A549 (cell line): ENCODE measurements at regions of chr11 and their contacts with region 1.

Region 1: DNA sequence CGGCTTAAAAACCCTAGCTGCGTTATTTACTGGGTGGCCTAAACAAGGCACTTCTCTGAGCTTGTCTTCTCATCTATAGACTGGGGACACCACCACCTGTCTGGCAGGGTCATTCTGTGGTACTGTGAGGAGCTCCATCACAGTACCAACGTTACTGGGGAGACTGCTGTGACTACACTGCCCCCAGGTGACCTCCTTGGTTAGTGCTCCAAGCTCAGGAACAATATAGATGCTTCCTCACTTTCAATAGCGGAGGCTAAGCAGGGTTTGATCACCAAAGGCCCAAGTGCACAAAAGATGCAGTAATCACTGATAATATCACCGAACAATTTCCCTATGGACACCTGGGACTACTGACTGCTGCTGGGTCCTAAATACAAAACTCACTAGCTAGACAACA is 18.8 kb downstream of the PRPF19 start:
- DNase-seq: peak; percentile 41 to 53
- ATAC-seq: peak; percentile 94 to 96
- H3K4me3 ChIP-seq: no peak overlapping the region
- H3K27ac ChIP-seq: no peak overlapping the region
- H3K4me1 ChIP-seq: no peaks in the 10 kb centered on the region
- CTCF ChIP-seq: peak; percentile 49
- EP300 ChIP-seq: no peak
- POLR2A ChIP-seq: no peak
- RAD21 ChIP-seq: peak; percentile 62 to 73

Region 2: GRCh38 chr11:60821827-60822599 is 65.5 kb before region 1 on chr11:
- CTCF ChIA-PET with region 1: interaction called, 18 read pairs
- POLR2A ChIA-PET with region 1: no interaction called
- DNase-seq: no peak
- ATAC-seq: no peak
- H3K4me3 ChIP-seq: no peak overlapping the region
- H3K27ac ChIP-seq: no peak overlapping the region
- H3K4me1 ChIP-seq: no peaks in the 10 kb centered on the region
- CTCF ChIP-seq: no peak
- EP300 ChIP-seq: no peak
- POLR2A ChIP-seq: no peak
- RAD21 ChIP-seq: no peak

Region 3: GRCh38 chr11:60841797-60842667 is 45.5 kb before region 1 on chr11 and contains the start of gene CCDC86:
- CTCF ChIA-PET with region 1: interaction called, 18 read pairs
- POLR2A ChIA-PET with region 1: no interaction called
- DNase-seq: peak; percentile 96 to 99
- ATAC-seq: peak; percentile 68 to 92
- H3K4me3 ChIP-seq: peak within 1 kb of the TSS; percentile 97
- H3K27ac ChIP-seq: peak within 1 kb of the TSS; percentile 87 to 94
- H3K4me1 ChIP-seq: peaks cover 18% of the 10 kb centered on the region; the same call in 1 of the 3 replicates
- CTCF ChIP-seq: no peak
- EP300 ChIP-seq: no peak
- POLR2A ChIP-seq: peak; percentile 62
- RAD21 ChIP-seq: no peak
- polyA plus RNA-seq, gene CCDC86: 39.8 and 42.8 TPM in 2 replicates

Region 4: GRCh38 chr11:60872961-60873524 is 14.5 kb before region 1 on chr11:
- CTCF ChIA-PET with region 1: interaction called, 24 read pairs
- POLR2A ChIA-PET with region 1: no interaction called
- DNase-seq: no peak
- ATAC-seq: peak; percentile 16 to 37; a peak in 2 of 6 replicates
- H3K4me3 ChIP-seq: no peak overlapping the region
- H3K27ac ChIP-seq: peak overlapping the region in 1 of 2 experiments; percentile 75; a peak in 3 of 6 replicates
- H3K4me1 ChIP-seq: peaks cover 22% of the 10 kb centered on the region
- CTCF ChIP-seq: no peak
- EP300 ChIP-seq: no peak
- POLR2A ChIP-seq: no peak
- RAD21 ChIP-seq: no peak

Region 5: DNA sequence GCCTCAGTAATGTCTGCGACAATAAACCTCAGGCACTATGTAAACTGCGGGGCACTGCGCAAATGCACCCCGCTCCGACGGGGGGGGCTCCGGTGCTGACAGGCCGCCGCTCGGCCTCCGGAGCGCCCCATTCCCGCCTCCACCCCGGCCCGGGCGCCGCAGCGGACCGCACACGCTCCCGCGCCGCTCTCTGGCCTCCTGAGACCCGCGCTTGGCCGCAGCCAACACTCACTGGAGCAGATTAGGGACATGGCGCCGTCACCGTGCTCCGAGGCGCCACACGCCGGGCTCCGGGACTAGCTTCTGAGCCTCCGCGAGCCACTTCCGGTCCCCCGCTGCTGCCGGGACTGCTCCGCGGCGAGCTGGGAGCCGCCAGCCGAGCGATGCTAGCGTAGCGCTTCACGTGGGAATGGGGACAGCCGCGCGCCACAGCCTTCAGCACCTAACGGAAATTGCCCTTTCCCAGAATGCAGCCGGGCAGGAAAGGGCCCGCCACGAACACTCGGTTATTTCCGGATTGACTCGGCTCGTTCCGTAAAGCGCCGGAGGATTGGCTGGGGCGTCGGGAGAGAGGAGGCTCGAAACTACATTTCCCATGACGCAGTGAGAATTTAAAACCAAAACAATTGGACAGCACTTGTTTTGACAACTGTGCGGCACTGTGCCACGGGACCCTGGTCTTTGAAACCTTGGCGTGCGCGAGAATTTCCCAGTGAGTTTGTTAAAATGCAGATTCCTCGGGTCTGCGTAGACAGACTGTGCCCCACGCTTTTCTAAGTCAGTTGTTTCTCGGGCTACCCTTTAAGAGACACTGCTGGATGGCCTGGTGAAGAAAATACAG is 18.8 kb after region 1 on chr11 and contains the start of gene PRPF19:
- CTCF ChIA-PET with region 1: interaction called, 93 read pairs
- POLR2A ChIA-PET with region 1: interaction called, 3 read pairs
- DNase-seq: peak; percentile 93 to 96
- ATAC-seq: peak; percentile 91 to 98
- H3K4me3 ChIP-seq: peak within 1 kb of the TSS; percentile 97
- H3K27ac ChIP-seq: peak within 1 kb of the TSS; percentile 90 to 97
- H3K4me1 ChIP-seq: peaks cover 12% of the 10 kb centered on the region
- CTCF ChIP-seq: no peak
- EP300 ChIP-seq: no peak
- POLR2A ChIP-seq: peak; percentile 83
- RAD21 ChIP-seq: no peak
- polyA plus RNA-seq, gene PRPF19: 41.1 and 51.7 TPM in 2 replicates

Region 6: DNA sequence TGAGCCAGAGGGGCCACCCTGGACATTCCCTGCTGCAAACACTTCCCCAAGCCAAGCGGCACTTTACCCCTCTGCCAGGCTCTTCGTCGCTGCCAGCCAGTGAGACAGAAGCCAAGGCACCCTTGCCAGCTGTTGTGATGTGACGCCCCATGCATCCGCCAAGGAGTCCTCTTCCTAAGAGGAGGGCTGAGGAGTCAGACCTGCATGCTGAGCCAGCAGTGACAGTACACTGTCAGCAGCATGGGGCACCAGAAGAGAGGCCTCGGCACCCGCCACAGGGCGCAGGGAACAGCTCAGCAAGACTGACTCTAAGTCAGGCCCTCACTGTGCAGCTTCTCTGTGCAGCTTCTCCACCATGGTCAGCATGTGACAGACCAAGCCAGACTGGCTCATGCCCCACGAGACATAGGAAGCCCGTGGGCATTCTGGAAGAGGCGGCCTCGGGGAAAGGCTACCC is 247.3 kb after region 1 on chr11:
- CTCF ChIA-PET with region 1: no interaction called
- POLR2A ChIA-PET with region 1: no interaction called
- DNase-seq: no peak
- ATAC-seq: no peak
- H3K4me3 ChIP-seq: no peak overlapping the region
- H3K27ac ChIP-seq: no peak overlapping the region
- H3K4me1 ChIP-seq: 0 out of 3 replicates have a peak, but pooled peaks cover 4% of the 10 kb centered on the region
- CTCF ChIP-seq: no peak
- EP300 ChIP-seq: no peak
- POLR2A ChIP-seq: no peak
- RAD21 ChIP-seq: no peak